Naive thymus-derived CD4-positive, alpha-beta T cell (primary cell): ENCODE measurements at regions of chr17 and their contacts with region 1.

Region 1: DNA sequence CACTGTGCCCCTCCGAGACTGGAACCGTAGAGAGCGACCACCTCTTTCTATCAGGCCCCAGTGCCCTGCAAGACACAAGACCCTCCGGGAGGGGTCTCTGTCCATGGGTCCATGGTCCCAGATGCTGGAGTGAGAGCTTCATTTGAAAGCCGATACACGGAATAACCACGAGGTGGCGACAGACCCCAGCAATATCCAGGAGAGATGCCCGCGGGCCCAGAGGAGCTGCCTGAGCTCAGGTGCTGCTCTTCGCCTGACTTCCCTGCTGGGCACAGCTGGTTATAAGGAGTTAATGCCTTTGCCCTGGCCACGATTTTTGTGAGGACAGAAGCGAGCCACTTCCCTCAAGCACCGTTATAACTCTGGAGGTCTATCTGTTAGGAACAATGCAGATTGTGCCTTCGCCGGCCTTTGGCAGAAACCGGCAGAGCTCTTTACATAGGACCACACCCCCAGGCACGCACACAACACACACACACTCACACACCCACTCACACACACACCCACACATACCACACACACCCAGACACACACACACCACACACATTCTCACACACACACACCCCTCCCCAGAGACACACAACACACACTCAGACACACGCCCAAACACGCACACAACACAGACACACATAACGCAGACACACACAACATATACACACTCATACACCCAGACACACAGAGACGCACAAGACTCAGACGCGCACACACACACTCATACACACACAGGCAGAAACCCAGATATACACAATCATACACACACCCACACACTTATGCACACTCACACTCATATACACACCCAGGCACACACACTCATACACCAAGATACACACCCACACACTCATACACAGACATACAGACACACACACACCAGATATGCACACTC is 436.4 kb downstream of the SOX9 start:
- DNase-seq: peak in 8 of 9 donors; percentile 25 to 59 (median 42)
- ATAC-seq: peak; percentile 64
- H3K4me3 ChIP-seq: no peak overlapping the region
- H3K4me3 Mint-ChIP-seq: no peak overlapping the region
- H3K27ac ChIP-seq: no peak overlapping the region
- H3K27ac Mint-ChIP-seq: no peak overlapping the region
- H3K4me1 ChIP-seq: no peaks in the 10 kb centered on the region
- H3K4me1 Mint-ChIP-seq: peaks cover 0 to 2% (median 0%) of the 10 kb centered on the region in 7 donors
- H3K27me3 ChIP-seq: no peaks in the 10 kb centered on the region
- H3K27me3 Mint-ChIP-seq: peaks cover 0 to 5% (median 4%) of the 10 kb centered on the region in 5 donors

Region 2: GRCh38 chr17:72479113-72479512 is 78.1 kb before region 1 on chr17:
- CTCF ChIA-PET with region 1: no interaction called
- POLR2A ChIA-PET with region 1: no interaction called
- intact Hi-C with region 1: no loop called
- DNase-seq: no peak
- ATAC-seq: no peak
- H3K4me3 ChIP-seq: no peak overlapping the region
- H3K4me3 Mint-ChIP-seq: no peak overlapping the region
- H3K27ac ChIP-seq: no peak overlapping the region
- H3K27ac Mint-ChIP-seq: no peak overlapping the region
- H3K4me1 ChIP-seq: no peaks in the 10 kb centered on the region
- H3K4me1 Mint-ChIP-seq: peaks cover 0 to 3% (median 0%) of the 10 kb centered on the region in 7 donors
- H3K27me3 ChIP-seq: no peaks in the 10 kb centered on the region
- H3K27me3 Mint-ChIP-seq: peaks cover 14 to 65% (median 33%) of the 10 kb centered on the region in 5 donors

Region 3: DNA sequence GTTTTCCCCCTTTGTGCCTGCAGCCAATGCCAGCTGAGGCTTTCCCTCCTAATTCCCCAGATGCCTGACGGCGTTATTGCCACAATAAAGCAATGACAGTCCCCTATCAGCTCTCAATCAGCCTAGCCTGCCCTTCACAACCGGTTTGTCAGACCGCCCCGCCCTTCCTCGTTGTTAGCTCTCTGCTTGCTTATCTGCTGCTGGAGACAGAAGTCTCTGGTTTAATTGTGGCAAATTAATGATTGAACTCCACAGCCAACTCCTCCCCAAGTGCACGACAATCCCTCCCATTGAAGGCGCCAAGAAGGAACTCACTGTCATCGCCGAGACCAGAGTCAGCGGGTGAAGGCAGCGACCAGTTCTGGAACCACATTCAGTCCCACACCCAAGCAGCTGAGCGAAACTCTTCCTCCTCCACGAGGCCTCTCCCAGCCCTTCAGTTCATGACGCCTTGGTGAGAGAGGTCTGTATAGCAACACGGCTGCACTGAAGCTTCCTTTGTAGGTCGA is 60.9 kb after region 1 on chr17:
- CTCF ChIA-PET with region 1: no interaction called
- POLR2A ChIA-PET with region 1: no interaction called
- intact Hi-C with region 1: loop called in 1 of 2 experiments (anchors 10 kb)
- DNase-seq: peak in 4 of 9 donors; percentile 4 to 35 (median 18)
- ATAC-seq: peak; percentile 82
- H3K4me3 ChIP-seq: no peak overlapping the region
- H3K4me3 Mint-ChIP-seq: peak overlapping the region; percentile 47 to 92 (median 80)
- H3K27ac ChIP-seq: no peak overlapping the region
- H3K27ac Mint-ChIP-seq: peak overlapping the region in 8 of 9 donors; percentile 38 to 81 (median 60)
- H3K4me1 ChIP-seq: peaks cover 0 to 3% of the 10 kb centered on the region in 2 donors
- H3K4me1 Mint-ChIP-seq: peaks cover 12 to 25% (median 18%) of the 10 kb centered on the region in 7 donors
- H3K27me3 ChIP-seq: no peaks in the 10 kb centered on the region
- H3K27me3 Mint-ChIP-seq: peaks cover 24 to 69% (median 43%) of the 10 kb centered on the region in 5 donors

Region 4: GRCh38 chr17:72985881-72986720 is 428.9 kb after region 1 on chr17:
- CTCF ChIA-PET with region 1: no interaction called
- POLR2A ChIA-PET with region 1: no interaction called
- intact Hi-C with region 1: loop called in 1 of 2 experiments (anchors 5 kb)
- DNase-seq: peak; percentile 12 to 60 (median 31)
- ATAC-seq: peak; percentile 74
- H3K4me3 ChIP-seq: no peak overlapping the region
- H3K4me3 Mint-ChIP-seq: no peak overlapping the region
- H3K27ac ChIP-seq: no peak overlapping the region
- H3K27ac Mint-ChIP-seq: peak overlapping the region in 1 of 9 donors; percentile 33
- H3K4me1 ChIP-seq: no peaks in the 10 kb centered on the region
- H3K4me1 Mint-ChIP-seq: peaks cover 0 to 3% (median 0%) of the 10 kb centered on the region in 7 donors
- H3K27me3 ChIP-seq: no peaks in the 10 kb centered on the region
- H3K27me3 Mint-ChIP-seq: no peaks in the 10 kb centered on the region

Region 5: GRCh38 chr17:73156166-73156840 is 599.1 kb after region 1 on chr17:
- CTCF ChIA-PET with region 1: interaction called, 4 read pairs
- POLR2A ChIA-PET with region 1: no interaction called
- intact Hi-C with region 1: loop called (anchors 1 kb)
- DNase-seq: peak in 8 of 9 donors; percentile 11 to 64 (median 45)
- ATAC-seq: peak; percentile 89
- H3K4me3 ChIP-seq: no peak overlapping the region
- H3K4me3 Mint-ChIP-seq: no peak overlapping the region
- H3K27ac ChIP-seq: no peak overlapping the region
- H3K27ac Mint-ChIP-seq: peak overlapping the region in 1 of 9 donors; percentile 33
- H3K4me1 ChIP-seq: no peaks in the 10 kb centered on the region
- H3K4me1 Mint-ChIP-seq: peaks cover 0 to 14% (median 7%) of the 10 kb centered on the region in 7 donors
- H3K27me3 ChIP-seq: no peaks in the 10 kb centered on the region
- H3K27me3 Mint-ChIP-seq: peaks cover 14 to 19% (median 17%) of the 10 kb centered on the region in 5 donors

Region 6: GRCh38 chr17:73255671-73256181 is 698.5 kb after region 1 on chr17:
- CTCF ChIA-PET with region 1: no interaction called
- POLR2A ChIA-PET with region 1: no interaction called
- intact Hi-C with region 1: loop called in 1 of 2 experiments (anchors 1 kb)
- DNase-seq: peak in 7 of 9 donors; percentile 38 to 63 (median 48)
- ATAC-seq: peak; percentile 75
- H3K4me3 ChIP-seq: no peak overlapping the region
- H3K4me3 Mint-ChIP-seq: no peak overlapping the region
- H3K27ac ChIP-seq: no peak overlapping the region
- H3K27ac Mint-ChIP-seq: no peak overlapping the region
- H3K4me1 ChIP-seq: no peaks in the 10 kb centered on the region
- H3K4me1 Mint-ChIP-seq: peaks cover 0 to 4% (median 0%) of the 10 kb centered on the region in 7 donors
- H3K27me3 ChIP-seq: no peaks in the 10 kb centered on the region
- H3K27me3 Mint-ChIP-seq: no peaks in the 10 kb centered on the region

Region 7: DNA sequence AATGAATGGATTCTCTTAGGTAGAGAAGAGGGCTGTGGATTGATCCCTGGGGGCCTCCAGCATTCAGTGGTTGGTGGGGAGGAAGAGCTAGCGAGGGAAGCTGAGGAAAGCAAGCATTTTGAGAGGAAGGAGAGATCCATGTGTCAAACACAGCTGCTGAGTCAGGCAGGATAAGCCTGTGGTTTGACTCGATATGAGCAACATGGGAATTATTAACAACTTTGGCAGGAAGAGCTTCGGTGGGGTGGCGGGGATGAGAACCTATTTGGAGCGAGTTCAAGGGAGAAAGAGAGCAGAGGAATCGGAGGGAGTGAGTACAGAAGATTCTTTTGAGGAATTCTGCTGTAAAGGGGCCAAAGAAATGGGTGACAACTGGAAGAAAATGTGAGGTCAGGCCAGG is 814.1 kb after region 1 on chr17:
- CTCF ChIA-PET with region 1: interaction called, 5 read pairs
- POLR2A ChIA-PET with region 1: no interaction called
- intact Hi-C with region 1: loop called (anchors 1 kb)
- DNase-seq: no peak
- ATAC-seq: no peak
- H3K4me3 ChIP-seq: no peak overlapping the region
- H3K4me3 Mint-ChIP-seq: no peak overlapping the region
- H3K27ac ChIP-seq: no peak overlapping the region
- H3K27ac Mint-ChIP-seq: no peak overlapping the region
- H3K4me1 ChIP-seq: no peaks in the 10 kb centered on the region
- H3K4me1 Mint-ChIP-seq: peaks cover 0 to 3% (median 0%) of the 10 kb centered on the region in 7 donors
- H3K27me3 ChIP-seq: no peaks in the 10 kb centered on the region
- H3K27me3 Mint-ChIP-seq: peaks cover 0 to 6% (median 0%) of the 10 kb centered on the region in 5 donors